ENCODE measurements at regions of chr11 and their contacts with region 1.

Region 1: GRCh38 chr11:123386796-123387510 is 43.1 kb upstream of the GRAMD1B start:
- DNase-seq: peak; percentile 21
- H3K4me3 ChIP-seq: no peak overlapping the region
- H3K27ac ChIP-seq: no peak overlapping the region
- H3K4me1 ChIP-seq: peaks cover 8% of the 10 kb centered on the region
- H3K27me3 ChIP-seq: no peaks in the 10 kb centered on the region
- CTCF ChIP-seq: no peak

Region 2: GRCh38 chr11:123246749-123247495 is 140.0 kb before region 1 on chr11:
- CTCF ChIA-PET with region 1: no interaction called
- dilution Hi-C with region 1: no loop called
- in situ Hi-C with region 1: no loop called
- intact Hi-C with region 1: no loop called
- DNase-seq: peak; percentile 59
- H3K4me3 ChIP-seq: no peak overlapping the region
- H3K27ac ChIP-seq: no peak overlapping the region
- H3K4me1 ChIP-seq: peaks cover 3% of the 10 kb centered on the region
- H3K27me3 ChIP-seq: no peaks in the 10 kb centered on the region
- CTCF ChIP-seq: peak; percentile 92 to 99

Region 3: DNA sequence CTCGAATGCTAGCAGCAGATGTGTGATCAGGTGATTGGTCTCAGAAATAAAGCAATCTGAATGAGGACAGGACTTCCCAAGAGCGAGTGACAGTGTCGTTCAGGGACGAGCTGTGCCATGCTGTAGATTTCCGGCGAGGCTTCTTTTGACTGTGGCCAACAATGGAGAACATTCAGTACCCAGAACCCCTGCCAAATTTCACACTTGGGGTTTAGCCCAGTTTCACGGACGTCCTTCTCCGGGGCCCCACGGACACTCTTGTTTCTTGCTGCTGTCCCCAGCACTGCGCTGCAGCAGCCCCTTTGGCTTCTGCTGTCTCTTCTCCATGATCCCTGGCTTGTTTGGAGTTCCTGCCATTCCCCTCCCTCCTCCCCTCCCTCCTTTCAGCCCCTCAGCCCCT is 72.0 kb before region 1 on chr11:
- CTCF ChIA-PET with region 1: no interaction called
- dilution Hi-C with region 1: loop called (anchors 5 kb)
- in situ Hi-C with region 1: no loop called
- intact Hi-C with region 1: no loop called
- DNase-seq: no peak
- H3K4me3 ChIP-seq: no peak overlapping the region
- H3K27ac ChIP-seq: no peak overlapping the region
- H3K4me1 ChIP-seq: no peaks in the 10 kb centered on the region
- H3K27me3 ChIP-seq: no peaks in the 10 kb centered on the region
- CTCF ChIP-seq: no peak

Measured in mammary epithelial cell (primary cell).